ENCODE measurements at regions of chr20 and their contacts with region 1.

Region 1: DNA sequence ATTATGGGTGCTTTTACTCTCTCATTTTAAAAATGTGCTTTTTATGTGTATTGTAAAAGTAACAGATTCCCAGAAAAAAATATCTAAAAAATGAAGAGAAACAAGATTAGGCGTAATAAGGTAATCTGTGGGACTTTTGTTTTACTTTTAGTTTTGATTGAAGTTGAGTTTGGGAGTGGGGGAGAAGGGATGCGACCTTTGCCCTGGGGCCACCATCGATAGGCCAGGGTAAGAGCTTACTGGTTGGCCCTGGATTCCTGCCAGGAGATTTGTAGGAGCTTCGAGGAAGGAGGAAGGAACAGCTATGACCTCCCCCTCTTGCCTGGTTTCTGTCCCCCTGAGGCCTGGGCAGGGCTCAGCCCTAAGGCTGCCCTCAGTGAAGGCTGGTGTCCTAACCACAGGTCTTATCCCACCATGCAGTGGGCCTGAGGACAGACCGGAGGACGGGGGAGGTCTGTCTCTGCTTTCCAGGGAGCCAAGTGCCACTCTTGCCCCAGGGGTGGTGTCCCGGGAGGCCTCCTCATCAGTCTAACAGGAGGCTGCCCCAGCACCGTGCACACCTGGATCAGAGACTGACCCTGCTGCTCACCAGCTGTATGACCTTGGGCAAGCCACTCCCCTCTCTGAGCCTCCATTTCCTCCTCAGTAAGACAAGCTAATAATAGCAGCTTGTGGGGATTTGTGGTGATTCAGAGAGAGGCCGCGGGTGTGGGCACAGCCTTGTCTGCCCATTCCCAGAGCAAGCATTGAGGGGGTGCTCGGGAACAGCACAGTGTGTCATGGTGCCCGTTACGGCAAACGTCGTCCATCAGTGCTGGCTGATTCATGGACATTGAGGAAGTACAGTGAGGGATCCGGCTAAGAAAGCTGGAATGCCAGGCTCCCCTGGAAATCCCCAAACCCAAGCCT is 21.2 kb downstream of the TGM2 start:
- DNase-seq: peak; percentile 63 to 91
- ATAC-seq: peak; percentile 69 to 74
- H3K4me3 ChIP-seq: no peak overlapping the region
- H3K27ac ChIP-seq: peak overlapping the region; percentile 83 to 95
- H3K4me1 ChIP-seq: peaks cover 75% of the 10 kb centered on the region
- CTCF ChIP-seq: no peak
- EP300 ChIP-seq: no peak
- POLR2A ChIP-seq: no peak
- RAD21 ChIP-seq: no peak

Region 2: GRCh38 chr20:38159957-38160756 is 16.3 kb after region 1 on chr20:
- CTCF ChIA-PET with region 1: interaction called, 28 read pairs
- POLR2A ChIA-PET with region 1: interaction called, 4 read pairs
- DNase-seq: no peak
- ATAC-seq: no peak
- H3K4me3 ChIP-seq: no peak overlapping the region
- H3K27ac ChIP-seq: peak overlapping the region; percentile 20 to 87; a peak in 3 of 6 replicates
- H3K4me1 ChIP-seq: peaks cover 76% of the 10 kb centered on the region
- CTCF ChIP-seq: no peak
- EP300 ChIP-seq: no peak
- POLR2A ChIP-seq: no peak
- RAD21 ChIP-seq: no peak

Region 3: GRCh38 chr20:38298705-38299288 is 154.9 kb after region 1 on chr20:
- CTCF ChIA-PET with region 1: no interaction called
- POLR2A ChIA-PET with region 1: no interaction called
- DNase-seq: no peak
- ATAC-seq: no peak
- H3K4me3 ChIP-seq: no peak overlapping the region
- H3K27ac ChIP-seq: no peak overlapping the region
- H3K4me1 ChIP-seq: no peaks in the 10 kb centered on the region
- CTCF ChIP-seq: no peak
- EP300 ChIP-seq: no peak
- POLR2A ChIP-seq: no peak
- RAD21 ChIP-seq: no peak

Region 4: DNA sequence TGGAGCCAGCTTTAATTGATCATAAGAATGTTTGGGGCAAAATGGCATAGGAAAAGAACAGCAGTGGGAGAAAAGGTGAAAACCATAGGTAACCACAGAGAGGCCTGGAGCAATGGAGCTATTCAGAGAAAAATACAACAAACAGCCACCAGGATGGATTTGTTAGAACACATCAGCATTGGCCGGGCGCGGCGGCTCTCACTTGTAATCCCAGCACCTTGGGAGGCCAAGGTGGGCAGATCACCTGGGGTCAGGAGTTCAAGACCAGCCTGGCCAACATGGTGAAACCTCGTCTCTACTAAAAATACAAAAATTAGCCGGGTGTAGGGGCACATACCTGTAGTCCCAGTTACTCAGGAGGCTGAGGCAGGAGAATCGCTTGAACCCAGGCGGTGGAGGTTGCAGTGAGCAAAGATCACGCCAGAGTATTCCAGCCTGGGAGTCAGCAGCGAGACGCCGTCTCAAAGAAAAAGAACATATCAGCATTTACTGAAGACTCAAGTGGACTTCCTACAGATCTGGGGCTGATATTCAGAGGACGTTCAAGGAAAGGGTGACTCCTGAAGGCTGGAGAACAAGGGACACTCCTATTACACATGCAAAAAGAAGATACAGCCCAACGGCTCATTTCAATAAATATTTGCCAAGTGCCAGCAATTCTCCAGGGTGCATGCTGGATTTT is 271.0 kb after region 1 on chr20:
- CTCF ChIA-PET with region 1: no interaction called
- POLR2A ChIA-PET with region 1: no interaction called
- DNase-seq: no peak
- ATAC-seq: peak in 1 of 2 experiments; percentile 16; a peak in 1 of 6 replicates
- H3K4me3 ChIP-seq: no peak overlapping the region
- H3K27ac ChIP-seq: no peak overlapping the region
- H3K4me1 ChIP-seq: no peaks in the 10 kb centered on the region
- CTCF ChIP-seq: no peak
- EP300 ChIP-seq: no peak
- POLR2A ChIP-seq: no peak
- RAD21 ChIP-seq: no peak

Region 5: GRCh38 chr20:39839399-39840119 is 1695.7 kb after region 1 on chr20:
- CTCF ChIA-PET with region 1: no interaction called
- POLR2A ChIA-PET with region 1: no interaction called
- DNase-seq: no peak
- ATAC-seq: no peak
- H3K4me3 ChIP-seq: no peak overlapping the region
- H3K27ac ChIP-seq: no peak overlapping the region
- H3K4me1 ChIP-seq: no peaks in the 10 kb centered on the region
- CTCF ChIP-seq: no peak
- EP300 ChIP-seq: no peak
- POLR2A ChIP-seq: no peak
- RAD21 ChIP-seq: no peak

Measured in A549 (cell line).